T-cell (primary cell): ENCODE measurements at regions of chr1 and their contacts with region 1.

Region 1: GRCh38 chr1:151113877-151114276 is 32.6 kb downstream of the SEMA6C start:
- DNase-seq: no peak
- ATAC-seq: no peak
- H3K4me3 ChIP-seq: no peak overlapping the region
- H3K4me3 Mint-ChIP-seq: no peak overlapping the region
- H3K27ac ChIP-seq: no peak overlapping the region
- H3K27ac Mint-ChIP-seq: no peak overlapping the region
- H3K4me1 ChIP-seq: no peaks in the 10 kb centered on the region
- H3K4me1 Mint-ChIP-seq: no peaks in the 10 kb centered on the region
- H3K27me3 ChIP-seq: no peaks in the 10 kb centered on the region
- H3K27me3 Mint-ChIP-seq: no peaks in the 10 kb centered on the region

Region 2: GRCh38 chr1:150777544-150777943 is 336.3 kb before region 1 on chr1:
- CTCF ChIA-PET with region 1: no interaction called
- POLR2A ChIA-PET with region 1: no interaction called
- DNase-seq: no peak
- ATAC-seq: no peak
- H3K4me3 ChIP-seq: no peak overlapping the region
- H3K4me3 Mint-ChIP-seq: no peak overlapping the region
- H3K27ac ChIP-seq: no peak overlapping the region
- H3K27ac Mint-ChIP-seq: no peak overlapping the region
- H3K4me1 ChIP-seq: no peaks in the 10 kb centered on the region
- H3K4me1 Mint-ChIP-seq: peaks cover 6 to 9% (median 9%) of the 10 kb centered on the region in 3 donors
- H3K27me3 ChIP-seq: peaks cover 0 to 4% of the 10 kb centered on the region in 2 experiments
- H3K27me3 Mint-ChIP-seq: no peaks in the 10 kb centered on the region

Region 3: GRCh38 chr1:150813058-150813707 is 300.7 kb before region 1 on chr1:
- CTCF ChIA-PET with region 1: no interaction called
- POLR2A ChIA-PET with region 1: no interaction called
- DNase-seq: peak in 8 of 35 experiments; percentile 2 to 24 (median 4)
- ATAC-seq: no peak
- H3K4me3 ChIP-seq: no peak overlapping the region
- H3K4me3 Mint-ChIP-seq: no peak overlapping the region
- H3K27ac ChIP-seq: no peak overlapping the region
- H3K27ac Mint-ChIP-seq: no peak overlapping the region
- H3K4me1 ChIP-seq: no peaks in the 10 kb centered on the region
- H3K4me1 Mint-ChIP-seq: peaks cover 1 to 3% (median 1%) of the 10 kb centered on the region in 3 donors
- H3K27me3 ChIP-seq: no peaks in the 10 kb centered on the region
- H3K27me3 Mint-ChIP-seq: no peaks in the 10 kb centered on the region

Region 4: GRCh38 chr1:151072224-151072623 is 41.7 kb before region 1 on chr1:
- CTCF ChIA-PET with region 1: no interaction called
- POLR2A ChIA-PET with region 1: no interaction called
- DNase-seq: no peak
- ATAC-seq: no peak
- H3K4me3 ChIP-seq: no peak overlapping the region
- H3K4me3 Mint-ChIP-seq: peak overlapping the region; percentile 94 to 97 (median 96)
- H3K27ac ChIP-seq: no peak overlapping the region
- H3K27ac Mint-ChIP-seq: peak overlapping the region; percentile 100
- H3K4me1 ChIP-seq: peaks cover 3 to 24% of the 10 kb centered on the region in 2 experiments
- H3K4me1 Mint-ChIP-seq: peaks cover 28 to 31% (median 28%) of the 10 kb centered on the region in 3 donors
- H3K27me3 ChIP-seq: no peaks in the 10 kb centered on the region
- H3K27me3 Mint-ChIP-seq: no peaks in the 10 kb centered on the region

Region 5: GRCh38 chr1:151146412-151147140 is 32.7 kb after region 1 on chr1 and contains the start of gene SEMA6C:
- CTCF ChIA-PET with region 1: no interaction called
- POLR2A ChIA-PET with region 1: interaction called in 1 of 2 experiments, 13 read pairs
- DNase-seq: peak; percentile 64 to 89 (median 80)
- ATAC-seq: peak; percentile 99 to 100 (median 99)
- H3K4me3 ChIP-seq: peak within 1 kb of the TSS; percentile 75 to 80
- H3K4me3 Mint-ChIP-seq: peak within 1 kb of the TSS; percentile 86 to 95 (median 94)
- H3K27ac ChIP-seq: no peak within 1 kb of the TSS
- H3K27ac Mint-ChIP-seq: peak within 1 kb of the TSS; percentile 81 to 91
- H3K4me1 ChIP-seq: peaks cover 0 to 23% of the 10 kb centered on the region in 2 experiments
- H3K4me1 Mint-ChIP-seq: peaks cover 14 to 17% (median 16%) of the 10 kb centered on the region in 3 donors
- H3K27me3 ChIP-seq: peaks cover 0 to 11% of the 10 kb centered on the region in 2 experiments
- H3K27me3 Mint-ChIP-seq: no peaks in the 10 kb centered on the region
- total RNA-seq, gene SEMA6C: 2.5 to 11.5 (median 8.5) TPM

Region 6: GRCh38 chr1:151364996-151365395 is 251.1 kb after region 1 on chr1:
- CTCF ChIA-PET with region 1: no interaction called
- POLR2A ChIA-PET with region 1: no interaction called
- DNase-seq: no peak
- ATAC-seq: no peak
- H3K4me3 ChIP-seq: no peak overlapping the region
- H3K4me3 Mint-ChIP-seq: no peak overlapping the region
- H3K27ac ChIP-seq: no peak overlapping the region
- H3K27ac Mint-ChIP-seq: no peak overlapping the region
- H3K4me1 ChIP-seq: no peaks in the 10 kb centered on the region
- H3K4me1 Mint-ChIP-seq: no peaks in the 10 kb centered on the region
- H3K27me3 ChIP-seq: peaks cover 0 to 17% of the 10 kb centered on the region in 2 experiments
- H3K27me3 Mint-ChIP-seq: no peaks in the 10 kb centered on the region